Activated CD4-positive, alpha-beta memory T cell treated with anti-CD3 and anti-CD28 coated beads, Interleukin-2, amount 10 ng/mL, durations not matched to agents 7 days and 5 days (primary cell): ENCODE measurements at regions of chr12 and their contacts with region 1.

Region 1: GRCh38 chr12:110100315-110100970 is 23.7 kb upstream of the IFT81 start:
- DNase-seq: peak; percentile 64
- H3K4me3 Mint-ChIP-seq: no peak overlapping the region
- H3K27ac Mint-ChIP-seq: peak overlapping the region; percentile 0
- H3K4me1 Mint-ChIP-seq: peaks cover 11% of the 10 kb centered on the region
- H3K27me3 Mint-ChIP-seq: no peaks in the 10 kb centered on the region

Region 2: GRCh38 chr12:110004598-110004997 is 95.8 kb before region 1 on chr12:
- CTCF ChIA-PET with region 1: no interaction called
- POLR2A ChIA-PET with region 1: no interaction called
- DNase-seq: no peak
- H3K4me3 Mint-ChIP-seq: peak overlapping the region; percentile 8
- H3K27ac Mint-ChIP-seq: peak overlapping the region; percentile 65
- H3K4me1 Mint-ChIP-seq: peaks cover 85% of the 10 kb centered on the region
- H3K27me3 Mint-ChIP-seq: no peaks in the 10 kb centered on the region

Region 3: DNA sequence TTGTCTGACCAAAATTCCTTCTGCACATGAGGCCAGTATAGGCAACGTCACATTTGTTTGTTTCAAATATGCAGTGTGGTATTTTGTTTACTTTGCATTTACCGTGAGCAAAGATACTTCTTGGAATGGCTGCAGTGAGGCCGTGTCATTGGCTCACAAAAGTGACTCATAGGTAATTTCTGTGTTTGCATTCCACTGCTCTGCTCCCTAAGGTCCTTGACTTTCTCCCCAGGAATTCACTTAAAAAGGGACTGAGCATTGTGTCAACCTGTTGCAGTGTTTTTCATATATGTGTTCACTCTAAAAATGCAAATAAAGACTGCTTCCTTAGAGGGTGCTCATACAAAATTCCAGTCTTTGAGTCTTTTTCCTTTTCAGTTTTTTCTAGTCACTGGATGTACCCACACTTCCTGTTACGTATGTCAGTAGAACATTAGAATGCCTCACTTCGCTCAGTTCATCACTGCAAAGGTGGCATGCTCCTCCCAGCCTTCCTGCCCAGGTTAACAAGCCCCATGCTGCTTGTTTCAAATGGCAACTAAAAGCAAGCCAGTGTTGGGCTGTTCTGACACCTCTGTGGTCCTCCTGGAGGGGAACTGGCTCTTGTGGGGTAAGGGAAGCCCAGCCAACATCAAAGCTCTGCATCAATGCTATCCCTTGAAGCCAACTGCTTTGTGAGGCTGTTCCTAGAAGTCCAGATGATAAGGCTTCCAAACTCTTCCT is 61.2 kb before region 1 on chr12:
- CTCF ChIA-PET with region 1: no interaction called
- POLR2A ChIA-PET with region 1: no interaction called
- DNase-seq: peak; percentile 53
- H3K4me3 Mint-ChIP-seq: peak overlapping the region; percentile 11
- H3K27ac Mint-ChIP-seq: peak overlapping the region; percentile 94
- H3K4me1 Mint-ChIP-seq: peaks cover 67% of the 10 kb centered on the region
- H3K27me3 Mint-ChIP-seq: no peaks in the 10 kb centered on the region

Region 4: GRCh38 chr12:110067531-110067930 is 32.9 kb before region 1 on chr12:
- CTCF ChIA-PET with region 1: no interaction called
- POLR2A ChIA-PET with region 1: no interaction called
- DNase-seq: no peak
- H3K4me3 Mint-ChIP-seq: no peak overlapping the region
- H3K27ac Mint-ChIP-seq: no peak overlapping the region
- H3K4me1 Mint-ChIP-seq: peaks cover 29% of the 10 kb centered on the region
- H3K27me3 Mint-ChIP-seq: no peaks in the 10 kb centered on the region

Region 5: DNA sequence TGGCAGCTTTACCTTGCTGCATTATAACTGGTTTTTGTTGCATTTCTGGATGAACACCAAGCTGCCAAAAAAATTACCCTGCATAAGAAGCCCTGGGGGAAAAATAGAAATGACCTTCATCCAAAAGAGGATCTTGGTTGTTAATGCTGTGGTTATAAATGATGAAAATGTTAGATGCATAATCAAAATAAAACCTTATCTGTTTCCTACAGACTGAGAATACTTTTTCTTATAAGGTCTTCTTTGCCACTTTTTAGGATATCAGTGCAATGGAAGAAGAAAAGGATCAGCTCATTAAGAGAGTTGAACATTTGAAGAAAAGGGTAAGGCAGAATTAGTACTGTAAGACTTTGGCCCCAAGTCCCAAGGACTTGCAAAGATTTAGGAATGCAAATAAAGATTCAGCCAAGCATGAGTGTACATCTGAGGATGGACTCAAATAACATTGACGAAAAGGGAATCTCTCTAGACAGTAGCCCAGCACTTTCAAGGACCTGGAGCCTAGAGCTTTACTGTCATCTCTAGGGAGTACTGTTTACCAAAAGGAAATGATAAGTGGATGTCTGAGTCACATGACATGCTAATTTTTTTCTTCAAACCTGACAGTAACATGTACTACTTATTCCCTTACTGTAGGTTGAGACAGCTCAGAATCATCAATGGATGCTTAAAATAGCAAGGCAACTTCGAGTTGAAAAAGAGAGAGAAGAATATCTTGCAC is 34.4 kb after region 1 on chr12:
- CTCF ChIA-PET with region 1: no interaction called
- POLR2A ChIA-PET with region 1: no interaction called
- DNase-seq: no peak
- H3K4me3 Mint-ChIP-seq: no peak overlapping the region
- H3K27ac Mint-ChIP-seq: no peak overlapping the region
- H3K4me1 Mint-ChIP-seq: peaks cover 8% of the 10 kb centered on the region
- H3K27me3 Mint-ChIP-seq: no peaks in the 10 kb centered on the region

Region 6: GRCh38 chr12:110245369-110245772 is 144.9 kb after region 1 on chr12:
- CTCF ChIA-PET with region 1: interaction called, 10 read pairs
- POLR2A ChIA-PET with region 1: interaction called, 3 read pairs
- DNase-seq: peak; percentile 62
- H3K4me3 Mint-ChIP-seq: no peak overlapping the region
- H3K27ac Mint-ChIP-seq: no peak overlapping the region
- H3K4me1 Mint-ChIP-seq: no peaks in the 10 kb centered on the region
- H3K27me3 Mint-ChIP-seq: peaks cover 6% of the 10 kb centered on the region